ENCODE measurements at regions of chr1 and their contacts with region 1.

Region 1: DNA sequence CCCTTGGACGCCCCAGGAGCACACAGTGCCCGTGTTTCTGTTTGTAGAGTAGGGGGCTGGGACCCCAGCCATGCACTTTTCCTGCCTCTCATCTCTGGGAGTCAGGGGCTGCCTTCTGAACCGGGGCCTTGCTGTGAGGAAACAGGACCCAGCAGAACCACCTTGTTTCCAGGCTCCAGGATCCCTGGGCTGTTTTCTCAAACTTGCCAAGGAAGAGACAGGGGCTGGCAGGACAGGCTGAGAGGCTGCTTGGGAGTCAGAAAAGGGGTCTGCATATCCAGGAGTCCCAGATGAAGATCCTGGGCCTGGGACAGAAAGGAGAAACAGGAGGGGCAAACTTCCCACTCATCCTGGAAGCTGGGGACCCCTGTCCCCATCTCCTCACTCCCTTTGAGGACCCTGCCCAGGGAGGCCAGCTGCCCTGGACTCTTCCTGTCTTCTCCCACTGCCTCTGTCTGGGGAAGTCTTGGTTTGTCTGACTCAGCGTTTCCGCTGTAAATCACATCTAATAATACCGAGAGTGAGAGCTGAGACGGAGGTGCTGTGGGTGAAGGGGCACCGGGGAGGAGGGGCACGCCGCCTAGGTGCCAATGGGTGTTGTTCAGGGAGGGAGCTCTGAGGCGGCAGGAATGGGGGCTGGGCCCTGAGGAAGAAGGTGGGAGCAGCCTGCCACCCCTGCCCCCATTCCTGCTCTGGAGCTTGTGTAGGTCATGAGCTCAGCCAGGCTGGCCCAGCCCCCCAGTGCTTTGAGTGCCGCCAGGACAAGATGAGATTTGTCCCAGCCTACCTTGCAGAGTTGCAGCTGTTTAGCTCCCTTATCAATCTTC is 16.7 kb downstream of the POU3F1 start:
- DNase-seq: no peak
- H3K4me3 ChIP-seq: peak overlapping the region; percentile 2 to 20 (median 10)
- H3K27ac ChIP-seq: peak overlapping the region in 2 of 4 donors; percentile 3 to 32
- H3K4me1 ChIP-seq: peaks cover 27 to 32% (median 28%) of the 10 kb centered on the region in 4 donors
- H3K27me3 ChIP-seq: peaks cover 0 to 3% (median 0%) of the 10 kb centered on the region in 4 donors
- CTCF ChIP-seq: no peak
- EP300 ChIP-seq: no peak
- POLR2A ChIP-seq: no peak

Region 2: GRCh38 chr1:38088366-38088765 is 58.5 kb after region 1 on chr1:
- intact Hi-C with region 1: no loop called
- DNase-seq: no peak
- H3K4me3 ChIP-seq: no peak overlapping the region
- H3K27ac ChIP-seq: no peak overlapping the region
- H3K4me1 ChIP-seq: no peaks in the 10 kb centered on the region
- H3K27me3 ChIP-seq: peaks cover 0 to 74% (median 0%) of the 10 kb centered on the region in 4 donors
- CTCF ChIP-seq: no peak
- EP300 ChIP-seq: no peak
- POLR2A ChIP-seq: no peak

Region 3: DNA sequence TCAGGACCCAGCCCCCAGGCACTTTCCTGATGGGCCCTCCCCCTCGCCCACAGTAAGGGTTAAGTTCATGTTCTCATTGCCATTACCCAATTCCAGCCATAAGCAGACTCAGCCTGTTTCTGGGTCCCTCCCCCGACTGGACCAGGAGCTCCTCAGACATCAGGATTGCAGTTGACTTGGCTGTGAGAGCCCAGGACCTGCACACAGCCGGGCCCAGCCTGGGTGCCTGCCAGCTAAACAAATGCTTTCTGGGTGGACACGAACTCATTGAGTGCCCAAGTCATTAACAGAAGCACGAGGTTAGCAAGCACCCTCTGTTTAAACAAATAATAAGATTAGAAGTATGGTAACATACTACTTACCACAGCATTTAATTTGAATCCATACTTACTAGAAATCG is 164.6 kb after region 1 on chr1:
- intact Hi-C with region 1: no loop called
- DNase-seq: no peak
- H3K4me3 ChIP-seq: no peak overlapping the region
- H3K27ac ChIP-seq: no peak overlapping the region
- H3K4me1 ChIP-seq: peaks cover 0 to 14% (median 11%) of the 10 kb centered on the region in 4 donors
- H3K27me3 ChIP-seq: peaks cover 0 to 28% (median 0%) of the 10 kb centered on the region in 4 donors
- CTCF ChIP-seq: no peak
- EP300 ChIP-seq: no peak
- POLR2A ChIP-seq: no peak

Region 4: GRCh38 chr1:38834937-38835827 is 805.3 kb after region 1 on chr1:
- intact Hi-C with region 1: loop called (anchors 10 kb)
- DNase-seq: no peak
- H3K4me3 ChIP-seq: no peak overlapping the region
- H3K27ac ChIP-seq: no peak overlapping the region
- H3K4me1 ChIP-seq: peaks cover 3 to 10% (median 5%) of the 10 kb centered on the region in 4 donors
- H3K27me3 ChIP-seq: no peaks in the 10 kb centered on the region
- CTCF ChIP-seq: peak; percentile 68 to 79 (median 78)
- EP300 ChIP-seq: no peak
- POLR2A ChIP-seq: no peak

Measured in esophagus muscularis mucosa (tissue), 4 donors.